CD4-positive, alpha-beta memory T cell (primary cell): ENCODE measurements at regions of chr12 and their contacts with region 1.

Region 1: DNA sequence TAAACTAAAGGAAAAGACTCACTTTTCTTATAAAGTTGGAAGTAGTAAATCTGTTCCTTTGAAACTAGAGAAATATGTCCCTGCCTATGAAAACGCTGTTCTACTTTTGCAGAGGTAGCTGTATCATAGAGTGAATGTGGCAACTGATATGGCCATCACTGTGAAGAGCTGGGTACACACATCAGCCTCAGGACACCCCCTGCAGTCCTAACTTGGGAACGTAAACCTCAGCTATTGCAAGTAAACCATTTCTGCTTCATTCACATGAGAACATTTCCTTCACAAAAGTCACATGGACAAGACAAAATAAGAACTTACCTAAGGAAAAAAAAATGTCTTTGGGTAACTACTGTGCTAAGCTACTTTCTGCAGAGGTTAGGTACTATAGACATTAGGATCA is 233.3 kb upstream of the PPFIA2 start:
- DNase-seq: peak; percentile 33 to 41 (median 37)
- H3K4me3 ChIP-seq: no peak overlapping the region
- H3K4me3 Mint-ChIP-seq: no peak overlapping the region
- H3K27ac ChIP-seq: no peak overlapping the region
- H3K27ac Mint-ChIP-seq: no peak overlapping the region
- H3K4me1 ChIP-seq: no peaks in the 10 kb centered on the region
- H3K4me1 Mint-ChIP-seq: peaks cover 0 to 5% (median 4%) of the 10 kb centered on the region in 4 donors
- H3K27me3 ChIP-seq: no peaks in the 10 kb centered on the region
- H3K27me3 Mint-ChIP-seq: no peaks in the 10 kb centered on the region

Region 2: GRCh38 chr12:81644503-81644902 is 348.0 kb before region 1 on chr12:
- CTCF ChIA-PET with region 1: interaction called, 25 read pairs
- POLR2A ChIA-PET with region 1: no interaction called
- intact Hi-C with region 1: no loop called
- DNase-seq: peak in 4 of 5 donors; percentile 28 to 49 (median 32)
- H3K4me3 ChIP-seq: no peak overlapping the region
- H3K4me3 Mint-ChIP-seq: no peak overlapping the region
- H3K27ac ChIP-seq: no peak overlapping the region
- H3K27ac Mint-ChIP-seq: no peak overlapping the region
- H3K4me1 ChIP-seq: no peaks in the 10 kb centered on the region
- H3K4me1 Mint-ChIP-seq: no peaks in the 10 kb centered on the region
- H3K27me3 ChIP-seq: no peaks in the 10 kb centered on the region
- H3K27me3 Mint-ChIP-seq: no peaks in the 10 kb centered on the region

Region 3: GRCh38 chr12:81809829-81810595 is 182.4 kb before region 1 on chr12:
- CTCF ChIA-PET with region 1: no interaction called
- POLR2A ChIA-PET with region 1: no interaction called
- intact Hi-C with region 1: loop called (anchors 10 kb)
- DNase-seq: no peak
- H3K4me3 ChIP-seq: no peak overlapping the region
- H3K4me3 Mint-ChIP-seq: peak overlapping the region in 1 of 8 donors; percentile 5
- H3K27ac ChIP-seq: no peak overlapping the region
- H3K27ac Mint-ChIP-seq: no peak overlapping the region
- H3K4me1 ChIP-seq: no peaks in the 10 kb centered on the region
- H3K4me1 Mint-ChIP-seq: peaks cover 0 to 11% (median 6%) of the 10 kb centered on the region in 4 donors
- H3K27me3 ChIP-seq: no peaks in the 10 kb centered on the region
- H3K27me3 Mint-ChIP-seq: no peaks in the 10 kb centered on the region

Region 4: GRCh38 chr12:82351390-82351789 is 358.9 kb after region 1 on chr12:
- CTCF ChIA-PET with region 1: no interaction called
- POLR2A ChIA-PET with region 1: no interaction called
- intact Hi-C with region 1: no loop called
- DNase-seq: no peak
- H3K4me3 ChIP-seq: no peak overlapping the region
- H3K4me3 Mint-ChIP-seq: no peak overlapping the region
- H3K27ac ChIP-seq: no peak overlapping the region
- H3K27ac Mint-ChIP-seq: peak overlapping the region in 1 of 7 donors; percentile 48
- H3K4me1 ChIP-seq: peaks cover 16% of the 10 kb centered on the region
- H3K4me1 Mint-ChIP-seq: peaks cover 9 to 17% (median 15%) of the 10 kb centered on the region in 4 donors
- H3K27me3 ChIP-seq: no peaks in the 10 kb centered on the region
- H3K27me3 Mint-ChIP-seq: no peaks in the 10 kb centered on the region